Heart left ventricle (tissue), 16 donors: ENCODE measurements at regions of chr10 and their contacts with region 1.

Region 1: DNA sequence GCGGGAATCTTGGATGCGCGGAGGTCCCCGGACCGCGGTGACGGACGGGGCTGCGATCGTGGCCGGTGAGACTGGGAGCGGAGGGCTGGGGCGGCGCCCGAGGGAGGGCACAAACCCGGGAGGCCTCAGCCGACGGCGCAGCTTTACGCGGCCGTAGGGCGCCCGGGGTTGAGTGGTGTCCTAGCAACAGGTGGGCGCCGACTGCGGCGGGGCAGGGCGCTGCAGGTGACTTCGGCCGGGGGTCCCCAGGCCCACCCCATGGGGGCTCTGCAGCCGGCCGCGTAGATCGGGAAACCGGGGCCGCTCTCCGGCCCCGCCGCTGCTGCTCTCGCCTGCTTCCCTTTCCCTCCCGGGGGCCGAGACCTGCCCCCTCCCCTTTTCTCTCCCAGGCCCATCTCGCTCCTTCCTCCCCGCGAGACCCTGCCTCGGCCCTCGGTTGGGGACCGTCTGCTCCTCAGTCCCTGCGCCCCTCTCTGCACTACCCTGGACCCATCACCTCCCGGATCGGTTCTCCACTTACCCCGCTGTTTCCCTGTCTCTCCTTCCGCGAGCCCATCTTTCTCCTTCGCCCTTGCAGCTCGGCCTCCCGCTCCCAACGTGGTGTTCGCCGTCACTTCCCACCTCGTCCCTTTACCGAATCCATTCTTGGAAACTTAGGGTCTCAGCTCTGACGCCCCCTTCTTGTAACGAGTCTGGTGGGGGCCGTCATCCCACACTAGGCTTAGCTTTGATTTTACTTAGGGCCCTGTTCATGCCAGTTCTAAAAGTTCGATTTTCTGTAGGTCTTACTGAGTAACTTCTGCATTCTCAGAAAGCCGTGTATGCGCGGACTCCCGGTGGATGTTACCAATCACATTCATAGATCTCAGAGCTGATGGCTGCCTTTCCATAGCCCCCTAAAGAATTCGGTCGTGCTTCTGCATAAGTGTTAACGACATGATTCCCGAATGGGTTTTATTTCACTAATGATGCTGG is 18.5 kb upstream of the ACBD5 start:
- DNase-seq: peak in 3 of 5 donors; percentile 33 to 69 (median 39)
- ATAC-seq: peak in 3 of 4 donors; percentile 71 to 88 (median 71)
- H3K4me3 ChIP-seq: peak overlapping the region; percentile 45 to 74 (median 67)
- H3K27ac ChIP-seq: peak overlapping the region in 6 of 12 donors; percentile 35 to 54 (median 46)
- H3K4me1 ChIP-seq: peaks cover 0 to 11% (median 5%) of the 10 kb centered on the region in 12 donors
- H3K27me3 ChIP-seq: peaks cover 0 to 36% (median 10%) of the 10 kb centered on the region in 9 donors
- CTCF ChIP-seq: no peak
- POLR2A ChIP-seq: no peak

Region 2: DNA sequence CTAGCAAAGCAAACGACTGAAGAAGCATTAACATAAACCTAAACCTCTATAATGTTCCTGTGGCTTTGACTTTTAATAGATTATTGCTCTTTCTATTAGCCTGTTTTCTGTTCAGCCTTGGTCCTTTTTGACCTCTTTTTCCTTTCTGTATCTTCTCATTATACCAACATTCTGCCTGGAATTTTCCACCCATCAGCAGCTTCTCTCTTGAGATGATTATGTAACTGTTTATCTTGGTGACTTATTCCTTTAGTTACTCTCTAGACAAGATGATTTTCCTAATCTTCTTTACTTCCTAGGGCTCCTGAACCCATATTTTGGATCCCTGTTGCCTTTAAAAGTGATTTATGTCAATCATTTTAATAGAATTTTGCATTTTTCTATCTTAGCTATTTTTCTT is 1244.0 kb before region 1 on chr10:
- intact Hi-C with region 1: no loop called
- DNase-seq: no peak
- ATAC-seq: peak in 1 of 4 donors; percentile 34
- H3K4me3 ChIP-seq: no peak overlapping the region
- H3K27ac ChIP-seq: peak overlapping the region in 4 of 12 donors; percentile 0 to 59 (median 8)
- H3K4me1 ChIP-seq: peaks cover 0 to 13% (median 0%) of the 10 kb centered on the region in 12 donors
- H3K27me3 ChIP-seq: no peaks in the 10 kb centered on the region
- CTCF ChIP-seq: no peak
- POLR2A ChIP-seq: no peak

Region 3: DNA sequence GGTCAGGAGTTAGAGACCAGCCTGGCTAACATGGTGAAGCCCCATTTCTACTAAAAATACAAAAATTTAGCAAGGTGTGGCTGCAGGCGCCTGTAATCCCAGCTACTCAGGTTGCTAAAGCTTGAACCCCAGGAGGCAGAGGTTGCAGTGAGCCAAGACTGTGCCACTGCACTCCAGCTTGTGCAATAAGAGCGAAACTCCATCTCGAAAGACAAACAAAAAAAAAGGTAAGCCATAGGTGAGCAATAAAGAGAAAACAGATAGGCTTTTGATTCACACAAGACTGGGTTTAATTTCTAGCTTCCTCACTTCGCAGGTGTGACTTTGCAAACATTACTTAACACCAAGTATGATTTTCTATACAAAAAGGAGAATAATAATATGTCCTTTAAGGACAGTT is 53.7 kb after region 1 on chr10:
- intact Hi-C with region 1: loop called in 1 of 10 experiments (anchors 5 kb)
- DNase-seq: no peak
- ATAC-seq: no peak
- H3K4me3 ChIP-seq: no peak overlapping the region
- H3K27ac ChIP-seq: no peak overlapping the region
- H3K4me1 ChIP-seq: no peaks in the 10 kb centered on the region
- H3K27me3 ChIP-seq: peaks cover 0 to 4% (median 0%) of the 10 kb centered on the region in 9 donors
- CTCF ChIP-seq: no peak
- POLR2A ChIP-seq: no peak